ENCODE measurements at regions of chr15 and their contacts with region 1.

Region 1: GRCh38 chr15:98896802-98897732 is 110.5 kb downstream of the PGPEP1L start:
- DNase-seq: peak in 2 of 4 experiments; percentile 21 to 27
- ATAC-seq: no peak
- H3K4me3 ChIP-seq: no peak overlapping the region
- H3K27ac ChIP-seq: no peak overlapping the region
- H3K4me1 ChIP-seq: no peaks in the 10 kb centered on the region; a peak in 1 of 5 replicates
- H3K27me3 ChIP-seq: peaks cover 9 to 24% of the 10 kb centered on the region in 2 experiments
- CTCF ChIP-seq: no peak
- EP300 ChIP-seq: peak; percentile 14; the same call in 1 of the 2 replicates
- POLR2A ChIP-seq: no peak
- RAD21 ChIP-seq: no peak

Region 2: GRCh38 chr15:98873441-98874201 is 23.4 kb before region 1 on chr15:
- CTCF ChIA-PET with region 1: no interaction called
- POLR2A ChIA-PET with region 1: no interaction called
- in situ Hi-C with region 1: no loop called
- intact Hi-C with region 1: no loop called
- DNase-seq: no peak
- ATAC-seq: no peak
- H3K4me3 ChIP-seq: no peak overlapping the region
- H3K27ac ChIP-seq: no peak overlapping the region
- H3K4me1 ChIP-seq: no peaks in the 10 kb centered on the region
- H3K27me3 ChIP-seq: peaks cover 15 to 27% of the 10 kb centered on the region in 2 experiments
- CTCF ChIP-seq: no peak
- EP300 ChIP-seq: no peak
- POLR2A ChIP-seq: no peak
- RAD21 ChIP-seq: no peak

Region 3: GRCh38 chr15:98996169-98996568 is 99.1 kb after region 1 on chr15:
- CTCF ChIA-PET with region 1: no interaction called
- POLR2A ChIA-PET with region 1: no interaction called
- in situ Hi-C with region 1: no loop called
- intact Hi-C with region 1: no loop called
- DNase-seq: no peak
- ATAC-seq: no peak
- H3K4me3 ChIP-seq: no peak overlapping the region
- H3K27ac ChIP-seq: no peak overlapping the region
- H3K4me1 ChIP-seq: no peaks in the 10 kb centered on the region
- H3K27me3 ChIP-seq: peaks cover 0 to 11% of the 10 kb centered on the region in 2 experiments; a peak in 2 of 5 replicates
- CTCF ChIP-seq: no peak
- EP300 ChIP-seq: no peak
- POLR2A ChIP-seq: no peak
- RAD21 ChIP-seq: no peak

Region 4: GRCh38 chr15:99059010-99059981 is 162.2 kb after region 1 on chr15:
- CTCF ChIA-PET with region 1: no interaction called
- POLR2A ChIA-PET with region 1: no interaction called
- in situ Hi-C with region 1: no loop called
- intact Hi-C with region 1: loop called (anchors 10 kb)
- DNase-seq: peak; percentile 61 to 76 (median 76)
- ATAC-seq: peak; percentile 96
- H3K4me3 ChIP-seq: no peak overlapping the region
- H3K27ac ChIP-seq: no peak overlapping the region
- H3K4me1 ChIP-seq: peaks cover 0 to 9% of the 10 kb centered on the region in 2 experiments; a peak in 2 of 5 replicates
- H3K27me3 ChIP-seq: peaks cover 9 to 51% of the 10 kb centered on the region in 2 experiments; a peak in 3 of 5 replicates
- CTCF ChIP-seq: peak; percentile 43 to 77 (median 62); a peak in 5 of 6 replicates
- EP300 ChIP-seq: no peak
- POLR2A ChIP-seq: no peak
- RAD21 ChIP-seq: peak; percentile 50 to 70

Measured in K562 (cell line).